MCF 10A (cell line): ENCODE measurements at regions of chr4 and their contacts with region 1.

Region 1: GRCh38 chr4:175891851-175892250 is 79.8 kb upstream of the GPM6A start:
- DNase-seq: peak; percentile 49
- H3K4me3 Mint-ChIP-seq: no peak overlapping the region
- H3K27ac Mint-ChIP-seq: no peak overlapping the region
- H3K4me1 Mint-ChIP-seq: peaks cover 6% of the 10 kb centered on the region
- H3K27me3 Mint-ChIP-seq: no peaks in the 10 kb centered on the region
- CTCF ChIP-seq: peak; percentile 42

Region 2: GRCh38 chr4:174716986-174717770 is 1174.7 kb before region 1 on chr4:
- CTCF ChIA-PET with region 1: no interaction called
- POLR2A ChIA-PET with region 1: no interaction called
- intact Hi-C with region 1: no loop called
- DNase-seq: no peak
- H3K4me3 Mint-ChIP-seq: no peak overlapping the region
- H3K27ac Mint-ChIP-seq: no peak overlapping the region
- H3K4me1 Mint-ChIP-seq: peaks cover 8% of the 10 kb centered on the region
- H3K27me3 Mint-ChIP-seq: no peaks in the 10 kb centered on the region
- CTCF ChIP-seq: no peak

Region 3: DNA sequence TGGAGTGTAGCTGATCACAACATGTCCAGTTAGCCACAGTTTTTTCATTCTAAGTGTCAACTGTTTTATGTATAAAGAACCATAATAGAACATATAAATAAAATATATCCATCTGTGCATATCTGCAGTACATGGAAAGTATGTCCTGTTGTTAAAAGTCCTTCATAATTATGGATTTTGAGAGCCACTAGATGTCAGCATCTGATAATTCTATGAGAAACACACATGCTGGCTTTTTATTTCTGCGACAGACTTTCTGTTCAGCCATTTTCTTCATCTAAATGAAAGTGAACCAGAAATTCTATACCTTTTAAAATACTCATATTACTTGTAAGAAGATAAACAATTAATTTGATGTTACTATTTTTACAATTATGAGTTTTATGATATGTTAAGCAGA is 331.2 kb before region 1 on chr4:
- CTCF ChIA-PET with region 1: interaction called, 64 read pairs
- POLR2A ChIA-PET with region 1: interaction called, 4 read pairs
- intact Hi-C with region 1: loop called (anchors 1 kb)
- DNase-seq: peak; percentile 55
- H3K4me3 Mint-ChIP-seq: no peak overlapping the region
- H3K27ac Mint-ChIP-seq: no peak overlapping the region
- H3K4me1 Mint-ChIP-seq: peaks cover 5% of the 10 kb centered on the region
- H3K27me3 Mint-ChIP-seq: no peaks in the 10 kb centered on the region
- CTCF ChIP-seq: peak; percentile 56

Region 4: GRCh38 chr4:175657571-175657970 is 234.3 kb before region 1 on chr4:
- CTCF ChIA-PET with region 1: interaction called, 5 read pairs
- POLR2A ChIA-PET with region 1: interaction called, 3 read pairs
- intact Hi-C with region 1: loop called (anchors 1 kb)
- DNase-seq: peak; percentile 64
- H3K4me3 Mint-ChIP-seq: no peak overlapping the region
- H3K27ac Mint-ChIP-seq: peak overlapping the region; percentile 46
- H3K4me1 Mint-ChIP-seq: peaks cover 15% of the 10 kb centered on the region
- H3K27me3 Mint-ChIP-seq: no peaks in the 10 kb centered on the region
- CTCF ChIP-seq: no peak

Region 5: DNA sequence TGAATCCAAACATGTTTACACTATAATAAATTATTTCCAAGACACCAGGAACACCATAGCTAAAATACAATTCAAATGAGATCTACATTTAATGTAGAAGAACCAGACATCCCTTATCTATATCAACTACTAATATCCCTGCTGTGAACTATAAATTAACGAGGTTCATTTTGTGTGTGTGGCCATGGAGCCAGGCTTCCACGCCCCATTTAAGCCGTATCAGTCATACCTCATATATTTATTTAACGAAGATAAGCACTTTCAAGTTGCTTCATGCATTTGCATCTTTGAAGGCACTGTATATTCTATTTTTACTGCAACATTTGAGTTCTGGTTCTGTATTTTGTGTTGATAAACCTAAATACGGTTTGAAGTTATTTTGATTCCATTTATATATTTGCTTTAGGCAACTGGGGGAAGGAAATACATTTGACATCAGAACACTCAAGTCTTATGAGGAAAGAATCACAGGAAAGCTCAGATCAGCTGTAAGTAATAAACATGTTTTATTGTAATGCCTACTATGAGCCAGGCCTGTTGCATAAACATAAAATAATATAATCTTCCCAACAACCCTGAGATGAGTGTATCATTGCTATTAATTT is 128.7 kb after region 1 on chr4:
- CTCF ChIA-PET with region 1: no interaction called
- POLR2A ChIA-PET with region 1: no interaction called
- intact Hi-C with region 1: no loop called
- DNase-seq: no peak
- H3K4me3 Mint-ChIP-seq: no peak overlapping the region
- H3K27ac Mint-ChIP-seq: no peak overlapping the region
- H3K4me1 Mint-ChIP-seq: peaks cover 6% of the 10 kb centered on the region
- H3K27me3 Mint-ChIP-seq: no peaks in the 10 kb centered on the region
- CTCF ChIP-seq: no peak

Region 6: DNA sequence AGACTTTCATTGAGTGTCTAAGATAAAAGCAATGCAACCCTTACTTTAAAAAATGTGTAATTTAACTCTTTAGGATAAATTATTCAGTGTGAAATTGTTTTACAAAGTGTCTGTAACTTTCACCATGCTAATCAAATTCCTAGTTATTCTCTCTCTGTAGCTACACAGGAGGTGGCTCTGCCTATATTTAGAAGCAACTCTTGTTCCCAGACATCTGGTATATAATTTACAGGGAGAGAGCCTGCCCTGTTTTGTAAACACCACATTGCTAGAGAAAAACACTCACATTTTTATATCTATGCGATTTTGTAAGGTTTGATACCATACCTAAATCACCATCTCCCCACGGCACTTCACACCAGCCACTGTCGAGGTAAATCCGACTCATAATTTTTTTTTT is 339.0 kb after region 1 on chr4:
- CTCF ChIA-PET with region 1: no interaction called
- POLR2A ChIA-PET with region 1: no interaction called
- intact Hi-C with region 1: no loop called
- DNase-seq: no peak
- H3K4me3 Mint-ChIP-seq: no peak overlapping the region
- H3K27ac Mint-ChIP-seq: no peak overlapping the region
- H3K4me1 Mint-ChIP-seq: no peaks in the 10 kb centered on the region
- H3K27me3 Mint-ChIP-seq: no peaks in the 10 kb centered on the region
- CTCF ChIP-seq: no peak